ENCODE measurements at regions of chr17 and their contacts with region 1.

Region 1: DNA sequence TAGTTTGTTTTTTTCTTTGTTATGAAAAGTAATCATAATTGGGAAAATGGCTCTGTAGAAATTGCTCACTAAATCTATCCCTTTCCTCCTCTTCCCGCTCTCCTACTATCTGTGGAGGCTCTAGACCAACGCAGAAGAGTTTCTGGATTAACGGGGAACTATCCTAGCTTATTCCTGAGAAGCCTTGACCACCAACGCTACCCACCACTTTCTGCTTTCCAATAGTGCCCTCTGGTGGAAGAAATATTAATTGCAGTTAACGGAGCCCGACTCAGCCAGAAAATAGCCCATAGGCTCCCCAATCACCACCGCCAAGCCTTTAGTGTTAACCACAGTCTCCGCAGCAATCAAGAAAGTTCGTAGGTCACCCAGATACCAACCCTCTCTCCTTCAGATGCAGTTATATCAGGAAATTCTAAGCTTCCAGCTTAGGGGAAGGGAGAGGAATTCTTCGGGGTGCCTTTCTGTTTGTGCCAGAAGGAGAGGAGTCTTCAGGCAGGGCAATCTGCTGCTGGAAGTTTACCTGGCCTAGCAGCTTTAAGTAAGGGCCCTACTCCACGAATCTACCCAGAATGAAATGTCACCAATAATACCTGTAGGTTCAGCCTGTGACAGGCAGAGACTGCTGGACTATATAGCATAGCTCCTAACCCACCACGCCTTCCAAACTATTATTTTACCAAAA is 23.0 kb upstream of the NSRP1 start:
- DNase-seq: peak; percentile 58
- ATAC-seq: peak; percentile 69
- H3K4me3 Mint-ChIP-seq: no peak overlapping the region
- H3K27ac Mint-ChIP-seq: no peak overlapping the region
- H3K4me1 Mint-ChIP-seq: peaks cover 4% of the 10 kb centered on the region
- H3K27me3 Mint-ChIP-seq: peaks cover 11% of the 10 kb centered on the region
- CTCF ChIP-seq: peak; percentile 91

Region 2: DNA sequence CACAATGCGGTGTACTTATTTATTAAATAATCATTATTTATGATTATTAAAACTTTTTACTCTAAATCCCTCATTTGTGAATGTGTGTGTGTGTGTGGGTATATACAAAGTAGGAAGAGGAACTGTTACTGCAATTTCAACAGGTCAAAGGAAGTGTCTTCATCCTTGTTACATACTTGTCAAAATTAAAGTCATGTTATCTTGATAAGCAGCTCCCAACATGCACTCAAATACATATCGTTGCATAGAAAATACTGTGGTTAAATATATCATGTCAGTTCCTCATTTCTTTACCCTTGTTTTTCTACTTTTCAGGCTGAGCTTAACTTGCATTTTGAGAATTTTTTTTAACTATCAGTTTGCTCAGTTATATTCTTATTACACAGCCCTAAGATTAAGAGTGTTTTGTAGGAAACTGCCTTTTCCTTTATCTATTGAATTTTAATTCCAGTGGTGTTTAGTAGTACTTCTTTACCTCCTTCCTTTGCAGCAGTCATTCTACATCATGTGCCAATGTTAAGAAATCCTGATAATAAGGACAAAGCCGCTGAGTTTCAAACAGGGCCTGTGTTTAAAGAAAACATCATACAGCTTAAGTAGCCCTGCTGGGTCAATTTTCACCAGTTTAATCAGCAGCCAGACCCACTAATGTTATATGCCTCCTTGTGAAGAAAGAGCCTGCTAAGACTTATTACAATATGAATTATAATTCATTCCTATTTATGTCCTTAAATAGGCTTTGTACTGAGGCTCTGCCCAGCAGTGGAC is 145.0 kb before region 1 on chr17:
- CTCF ChIA-PET with region 1: no interaction called
- POLR2A ChIA-PET with region 1: no interaction called
- intact Hi-C with region 1: no loop called
- DNase-seq: no peak
- ATAC-seq: no peak
- H3K4me3 Mint-ChIP-seq: no peak overlapping the region
- H3K27ac Mint-ChIP-seq: no peak overlapping the region
- H3K4me1 Mint-ChIP-seq: no peaks in the 10 kb centered on the region
- H3K27me3 Mint-ChIP-seq: no peaks in the 10 kb centered on the region
- CTCF ChIP-seq: no peak

Region 3: GRCh38 chr17:30005709-30006320 is 87.8 kb before region 1 on chr17:
- CTCF ChIA-PET with region 1: interaction called, 11 read pairs
- POLR2A ChIA-PET with region 1: no interaction called
- intact Hi-C with region 1: no loop called
- DNase-seq: no peak
- ATAC-seq: no peak
- H3K4me3 Mint-ChIP-seq: no peak overlapping the region
- H3K27ac Mint-ChIP-seq: no peak overlapping the region
- H3K4me1 Mint-ChIP-seq: peaks cover 3% of the 10 kb centered on the region
- H3K27me3 Mint-ChIP-seq: no peaks in the 10 kb centered on the region
- CTCF ChIP-seq: no peak

Region 4: DNA sequence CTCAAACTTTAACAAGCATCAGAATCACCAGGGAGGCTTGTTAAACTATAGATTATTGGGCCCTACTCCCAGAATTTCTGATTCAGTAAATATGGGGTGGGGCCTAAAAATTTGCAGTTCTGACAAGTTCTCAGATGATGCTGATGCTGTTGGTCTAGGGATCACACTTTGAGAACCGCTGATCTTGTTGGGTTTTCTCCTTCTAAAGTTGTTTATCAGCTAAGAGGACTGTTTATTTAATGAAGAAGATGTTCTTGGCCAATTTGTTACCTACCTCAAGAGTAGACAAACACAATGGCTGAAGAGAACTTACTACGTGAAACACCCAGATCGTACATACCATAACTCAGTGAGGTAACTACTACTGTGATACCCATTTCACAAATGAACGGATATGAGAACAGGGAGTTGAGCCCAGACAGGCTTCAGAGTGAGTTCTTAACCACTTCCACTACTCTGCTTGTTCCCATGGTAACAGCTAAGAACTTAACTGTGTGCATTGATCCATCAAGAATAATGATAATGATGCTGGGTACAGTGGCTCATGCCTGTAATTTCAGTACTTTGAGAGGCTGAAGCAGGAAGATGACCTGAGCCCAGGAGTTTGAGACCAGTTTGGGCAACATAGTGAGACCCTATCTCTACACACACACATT is 62.3 kb before region 1 on chr17:
- CTCF ChIA-PET with region 1: interaction called, 42 read pairs
- POLR2A ChIA-PET with region 1: no interaction called
- intact Hi-C with region 1: loop called (anchors 1 kb)
- DNase-seq: no peak
- ATAC-seq: no peak
- H3K4me3 Mint-ChIP-seq: no peak overlapping the region
- H3K27ac Mint-ChIP-seq: no peak overlapping the region
- H3K4me1 Mint-ChIP-seq: no peaks in the 10 kb centered on the region
- H3K27me3 Mint-ChIP-seq: no peaks in the 10 kb centered on the region
- CTCF ChIP-seq: no peak

Region 5: DNA sequence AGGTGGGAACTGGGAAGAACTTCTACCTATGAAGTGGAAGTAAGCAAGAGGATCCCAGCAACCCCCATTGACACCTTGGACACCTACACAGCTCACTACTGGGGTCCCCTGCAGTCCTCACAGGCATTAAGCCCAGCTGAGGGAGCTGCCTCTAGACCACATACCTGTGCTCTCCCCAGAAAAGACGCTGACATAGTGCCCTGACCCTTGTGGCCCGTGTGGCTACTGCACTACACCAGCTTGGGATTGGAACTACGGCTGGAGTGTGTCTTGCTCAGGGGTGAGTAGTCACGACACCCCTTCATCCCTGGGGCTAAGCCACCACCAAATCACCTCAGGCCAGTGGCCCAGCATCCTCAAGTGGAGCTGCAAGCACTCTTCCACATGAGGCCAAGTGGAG is 31.2 kb before region 1 on chr17:
- CTCF ChIA-PET with region 1: interaction called, 14 read pairs
- POLR2A ChIA-PET with region 1: no interaction called
- intact Hi-C with region 1: no loop called
- DNase-seq: no peak
- ATAC-seq: no peak
- H3K4me3 Mint-ChIP-seq: no peak overlapping the region
- H3K27ac Mint-ChIP-seq: no peak overlapping the region
- H3K4me1 Mint-ChIP-seq: no peaks in the 10 kb centered on the region
- H3K27me3 Mint-ChIP-seq: peaks cover 6% of the 10 kb centered on the region
- CTCF ChIP-seq: no peak

Region 6: DNA sequence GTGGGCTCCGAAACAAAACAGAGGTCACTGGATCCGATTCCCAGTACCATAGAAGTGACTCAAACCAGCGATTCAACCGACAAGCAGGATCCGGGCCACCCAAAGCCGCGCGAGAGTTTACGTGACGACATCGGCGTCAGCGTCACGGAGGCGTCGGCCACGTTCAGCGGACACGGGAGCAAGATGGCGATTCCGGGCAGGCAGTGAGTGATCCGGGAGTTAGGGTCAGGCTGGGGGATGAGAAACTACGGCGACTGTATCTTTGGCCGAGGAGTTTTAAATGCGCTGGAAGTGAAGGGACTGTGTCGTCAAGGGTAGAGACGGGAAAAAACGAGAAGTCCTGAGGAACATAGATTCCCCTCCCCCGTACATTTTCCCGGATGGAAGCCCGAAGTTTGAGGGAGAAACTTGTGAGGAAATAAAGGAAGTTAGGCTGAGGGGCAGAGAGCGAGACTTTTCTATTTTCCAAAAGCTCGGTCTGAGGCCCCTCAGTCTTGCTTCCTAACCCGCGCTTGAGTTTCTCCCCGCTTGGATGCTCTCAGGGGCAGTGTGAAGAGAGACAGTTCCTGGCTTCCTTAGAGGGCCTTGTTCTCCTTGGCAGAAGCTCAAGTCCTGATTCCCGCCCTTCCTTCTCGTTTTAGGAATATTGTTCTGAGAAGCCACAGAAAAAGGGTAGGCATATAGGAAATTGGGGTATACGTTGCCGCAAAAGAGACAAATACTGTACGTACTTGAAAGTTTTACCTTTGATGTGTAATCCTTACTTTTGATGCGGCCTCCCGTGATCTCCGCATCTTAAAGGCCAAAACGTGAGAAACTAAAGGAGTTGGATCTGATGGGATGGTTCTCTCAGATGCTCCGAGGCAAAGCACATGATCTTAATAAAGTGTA is 23.3 kb after region 1 on chr17 and contains the start of gene NSRP1:
- CTCF ChIA-PET with region 1: interaction called, 15 read pairs
- POLR2A ChIA-PET with region 1: interaction called, 4 read pairs
- intact Hi-C with region 1: no loop called
- DNase-seq: peak; percentile 97
- ATAC-seq: peak; percentile 92
- H3K4me3 Mint-ChIP-seq: peak within 1 kb of the TSS; percentile 98
- H3K27ac Mint-ChIP-seq: peak within 1 kb of the TSS; percentile 98
- H3K4me1 Mint-ChIP-seq: peaks cover 46% of the 10 kb centered on the region
- H3K27me3 Mint-ChIP-seq: no peaks in the 10 kb centered on the region
- CTCF ChIP-seq: no peak
- total RNA-seq, gene NSRP1: 24.3 to 28.4 TPM